Breast epithelium (tissue), 4 donors: ENCODE measurements at regions of chr15 and their contacts with region 1.

Region 1: GRCh38 chr15:48560321-48561051 is 85.0 kb downstream of the FBN1 start:
- DNase-seq: no peak
- H3K4me3 ChIP-seq: no peak overlapping the region
- H3K27ac ChIP-seq: peak overlapping the region in 1 of 2 donors; percentile 43
- H3K4me1 ChIP-seq: no peaks in the 10 kb centered on the region
- H3K27me3 ChIP-seq: no peaks in the 10 kb centered on the region
- CTCF ChIP-seq: no peak
- POLR2A ChIP-seq: no peak

Region 2: DNA sequence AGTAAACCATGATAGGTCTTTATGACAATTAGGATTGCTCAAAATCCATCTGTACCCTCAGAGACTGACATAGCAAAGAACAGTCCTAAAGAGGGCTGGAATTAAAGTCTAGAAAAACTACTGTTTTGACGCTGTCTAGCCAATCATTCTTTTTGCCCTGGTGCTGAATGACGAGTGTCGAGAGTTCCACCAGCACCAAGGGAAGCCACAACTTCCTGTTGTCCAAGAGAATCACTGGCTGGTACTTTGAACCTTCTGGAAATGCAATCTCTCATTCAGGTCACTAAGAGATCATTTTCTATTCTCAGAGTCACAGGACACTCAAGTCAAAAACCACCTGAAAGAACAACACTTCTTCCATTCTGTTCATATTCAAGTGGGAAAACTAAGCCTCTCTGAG is 47.4 kb after region 1 on chr15:
- intact Hi-C with region 1: loop called (anchors 2 kb)
- DNase-seq: no peak
- H3K4me3 ChIP-seq: no peak overlapping the region
- H3K27ac ChIP-seq: no peak overlapping the region
- H3K4me1 ChIP-seq: no peaks in the 10 kb centered on the region
- H3K27me3 ChIP-seq: no peaks in the 10 kb centered on the region
- CTCF ChIP-seq: no peak
- POLR2A ChIP-seq: no peak

Region 3: DNA sequence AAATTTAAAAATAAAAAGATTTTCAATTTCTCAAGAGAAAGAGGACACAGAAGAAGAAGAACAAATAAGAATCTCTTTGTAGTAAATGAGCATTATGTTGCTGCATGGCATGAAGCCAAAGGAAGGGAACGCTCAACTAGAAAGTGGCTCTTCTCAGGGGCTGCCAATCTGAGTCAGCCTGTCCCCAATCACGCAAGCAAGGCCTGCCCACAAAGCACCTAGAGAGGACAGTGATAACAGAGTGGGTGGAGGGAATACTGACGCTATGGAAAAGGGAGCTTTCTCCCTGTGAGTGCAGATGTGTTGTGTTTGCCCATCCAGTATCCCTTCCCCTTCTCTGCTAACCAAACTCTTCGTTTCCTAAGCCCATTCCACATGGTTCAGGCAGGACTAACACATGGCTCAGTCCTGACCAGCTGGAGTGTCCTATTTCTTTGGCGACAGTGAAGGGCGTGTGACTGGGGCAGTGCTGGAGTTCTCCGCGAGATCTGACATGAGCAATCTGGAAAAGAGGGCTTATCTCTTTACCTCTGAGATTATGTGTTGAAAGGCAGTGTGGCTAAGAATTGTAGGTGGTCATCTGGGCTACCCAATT is 70.8 kb after region 1 on chr15:
- intact Hi-C with region 1: no loop called
- DNase-seq: no peak
- H3K4me3 ChIP-seq: no peak overlapping the region
- H3K27ac ChIP-seq: no peak overlapping the region
- H3K4me1 ChIP-seq: no peaks in the 10 kb centered on the region
- H3K27me3 ChIP-seq: no peaks in the 10 kb centered on the region
- CTCF ChIP-seq: no peak
- POLR2A ChIP-seq: no peak